ENCODE measurements at regions of chr3 and their contacts with region 1.

Region 1: DNA sequence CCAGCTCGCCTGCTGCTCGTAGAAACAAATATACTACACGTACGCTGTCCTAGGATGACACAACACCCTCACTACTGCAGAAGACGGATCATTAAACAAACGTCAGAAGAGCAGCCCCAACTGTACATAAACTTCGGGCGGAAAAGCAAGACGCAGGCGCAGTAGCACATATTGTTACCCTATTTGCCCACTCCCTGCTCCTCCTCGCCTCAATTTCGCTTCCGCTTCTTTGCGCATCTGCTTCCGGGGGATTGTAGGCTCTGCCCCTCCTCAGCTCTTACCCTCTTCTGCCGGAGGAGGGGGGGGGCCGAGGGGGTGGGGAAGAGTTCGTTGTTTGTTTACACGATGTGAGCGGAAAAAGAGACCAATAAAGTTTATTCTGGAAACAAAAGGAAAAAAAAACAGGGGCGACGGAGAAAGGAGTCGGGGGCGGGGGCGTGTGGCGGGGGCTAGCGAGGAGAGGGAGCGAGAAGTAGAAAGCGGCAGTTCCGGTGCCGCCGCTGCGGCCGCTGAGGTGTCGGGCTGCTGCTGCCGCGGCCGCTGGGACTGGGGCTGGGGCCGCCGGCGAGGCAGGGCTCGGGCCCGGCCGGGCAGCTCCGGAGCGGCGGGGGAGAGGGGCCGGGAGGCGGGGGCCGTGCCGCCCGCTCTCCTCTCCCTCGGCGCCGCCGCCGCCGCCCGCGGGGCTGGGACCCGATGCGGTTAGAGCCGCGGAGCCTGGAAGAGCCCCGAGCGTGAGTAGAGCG is at the start of gene PIK3CA:
- DNase-seq: peak; percentile 98
- ATAC-seq: peak; percentile 82
- H3K4me3 ChIP-seq: peak within 1 kb of the TSS; percentile 91
- H3K27ac ChIP-seq: peak within 1 kb of the TSS; percentile 29
- H3K4me1 ChIP-seq: peaks cover 12% of the 10 kb centered on the region; the same call in 1 of the 2 replicates
- H3K27me3 ChIP-seq: no peaks in the 10 kb centered on the region
- CTCF ChIP-seq: no peak
- total RNA-seq, gene PIK3CA: 13.4 and 20.5 TPM in 2 replicates

Region 2: GRCh38 chr3:178966299-178967176 is 181.5 kb before region 1 on chr3:
- CTCF ChIA-PET with region 1: no interaction called
- POLR2A ChIA-PET with region 1: no interaction called
- intact Hi-C with region 1: no loop called
- DNase-seq: peak; percentile 61
- ATAC-seq: peak; percentile 57
- H3K4me3 ChIP-seq: peak overlapping the region; percentile 26; the same call in 1 of the 2 replicates
- H3K27ac ChIP-seq: no peak overlapping the region
- H3K4me1 ChIP-seq: peaks cover 2% of the 10 kb centered on the region; the same call in 1 of the 2 replicates
- H3K27me3 ChIP-seq: peaks cover 4% of the 10 kb centered on the region; the same call in 1 of the 2 replicates
- CTCF ChIP-seq: peak; percentile 80

Region 3: DNA sequence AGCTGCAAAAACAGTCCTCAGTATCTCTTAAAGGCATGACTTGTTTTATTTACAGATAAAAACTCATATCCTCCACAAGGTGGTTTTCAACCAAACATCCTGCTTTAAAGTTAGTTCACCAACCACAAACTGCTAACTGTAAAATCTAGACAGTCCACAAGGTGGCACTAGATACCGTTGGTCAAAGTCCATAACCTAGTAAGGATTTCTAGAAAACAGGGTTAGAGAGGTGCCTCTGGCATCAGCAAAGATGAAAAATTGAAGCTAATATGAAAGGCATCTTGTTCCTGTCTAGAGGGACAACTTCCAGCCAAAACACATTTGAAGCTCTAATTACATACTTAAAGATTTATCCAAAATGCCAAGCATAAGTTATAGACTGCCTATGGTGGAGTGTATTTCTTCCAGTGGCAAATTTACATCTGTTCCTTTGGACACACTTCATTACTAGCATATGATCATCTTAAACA is 132.5 kb before region 1 on chr3:
- CTCF ChIA-PET with region 1: no interaction called
- POLR2A ChIA-PET with region 1: interaction called, 6 read pairs
- intact Hi-C with region 1: loop called (anchors 1 kb)
- DNase-seq: peak; percentile 96
- ATAC-seq: peak; percentile 86
- H3K4me3 ChIP-seq: no peak overlapping the region
- H3K27ac ChIP-seq: no peak overlapping the region
- H3K4me1 ChIP-seq: peaks cover 4% of the 10 kb centered on the region; the same call in 1 of the 2 replicates
- H3K27me3 ChIP-seq: no peaks in the 10 kb centered on the region
- CTCF ChIP-seq: peak; percentile 95

Region 4: DNA sequence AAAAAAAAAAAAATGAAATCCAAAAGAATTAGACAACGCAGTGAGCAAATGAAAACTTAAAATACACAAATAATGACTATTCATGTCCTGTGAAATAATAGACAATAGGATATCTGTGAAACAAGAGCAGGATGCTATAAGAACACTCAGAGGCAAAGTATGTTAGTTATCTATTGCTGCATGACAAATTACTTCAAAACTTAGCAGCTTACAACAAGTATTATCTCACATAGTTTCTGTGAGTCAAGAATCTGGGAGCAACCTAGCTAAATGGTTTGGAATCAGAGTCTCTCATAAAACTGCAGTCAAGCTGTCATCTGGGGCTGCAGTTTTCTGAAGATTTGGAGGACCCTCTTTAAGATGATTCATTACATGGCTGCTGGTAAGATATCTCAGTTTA is 40.0 kb before region 1 on chr3:
- CTCF ChIA-PET with region 1: interaction called, 4 read pairs
- POLR2A ChIA-PET with region 1: interaction called, 15 read pairs
- intact Hi-C with region 1: loop called (anchors 1 kb)
- DNase-seq: peak; percentile 76
- ATAC-seq: peak; percentile 91
- H3K4me3 ChIP-seq: no peak overlapping the region
- H3K27ac ChIP-seq: peak overlapping the region; percentile 35
- H3K4me1 ChIP-seq: peaks cover 14% of the 10 kb centered on the region
- H3K27me3 ChIP-seq: no peaks in the 10 kb centered on the region
- CTCF ChIP-seq: no peak

Region 5: DNA sequence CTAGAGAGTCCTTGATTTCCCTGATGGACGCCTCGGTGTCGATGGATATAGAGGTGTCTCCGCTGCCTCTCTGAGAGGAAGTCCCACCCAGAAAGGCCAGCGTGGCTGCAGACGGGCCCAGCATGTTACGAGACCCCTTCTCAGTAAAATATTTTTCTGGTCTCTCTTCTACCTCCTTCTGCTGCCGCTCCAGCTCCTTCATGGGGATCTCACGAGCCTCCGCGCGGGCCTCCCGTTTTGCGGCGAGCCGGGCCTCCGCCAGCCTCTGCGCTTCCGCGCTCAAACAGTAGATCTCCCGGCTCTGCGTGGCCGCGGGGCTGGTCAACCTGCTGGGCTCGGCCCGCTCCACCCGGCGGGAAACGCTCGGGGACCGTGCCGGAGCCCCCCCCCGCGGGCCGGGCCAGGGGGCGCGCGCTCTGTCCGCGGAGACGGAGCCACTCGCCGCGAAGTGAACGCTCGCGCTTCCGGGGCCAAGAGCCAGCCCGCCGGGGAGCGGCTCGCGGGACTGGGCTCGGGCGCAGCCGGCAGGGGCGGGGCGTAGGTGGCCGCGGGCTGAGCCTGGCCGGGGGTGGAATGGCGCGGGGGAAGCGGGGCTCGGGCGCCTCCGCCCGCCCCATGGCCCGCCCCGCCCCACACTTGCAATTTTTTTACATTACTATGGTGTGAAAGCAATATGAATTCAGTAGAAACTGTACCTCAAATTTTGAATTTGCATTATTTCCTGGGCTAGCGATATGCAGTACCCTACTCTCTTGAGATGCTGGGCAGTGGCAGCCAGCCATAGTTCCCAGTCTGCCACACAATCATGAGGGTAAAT is 113.1 kb after region 1 on chr3:
- CTCF ChIA-PET with region 1: no interaction called
- POLR2A ChIA-PET with region 1: no interaction called
- intact Hi-C with region 1: loop called (anchors 2 kb)
- DNase-seq: peak; percentile 77
- ATAC-seq: peak; percentile 97
- H3K4me3 ChIP-seq: peak overlapping the region; percentile 79
- H3K27ac ChIP-seq: no peak overlapping the region
- H3K4me1 ChIP-seq: peaks cover 11% of the 10 kb centered on the region
- H3K27me3 ChIP-seq: no peaks in the 10 kb centered on the region
- CTCF ChIP-seq: no peak

Region 6: DNA sequence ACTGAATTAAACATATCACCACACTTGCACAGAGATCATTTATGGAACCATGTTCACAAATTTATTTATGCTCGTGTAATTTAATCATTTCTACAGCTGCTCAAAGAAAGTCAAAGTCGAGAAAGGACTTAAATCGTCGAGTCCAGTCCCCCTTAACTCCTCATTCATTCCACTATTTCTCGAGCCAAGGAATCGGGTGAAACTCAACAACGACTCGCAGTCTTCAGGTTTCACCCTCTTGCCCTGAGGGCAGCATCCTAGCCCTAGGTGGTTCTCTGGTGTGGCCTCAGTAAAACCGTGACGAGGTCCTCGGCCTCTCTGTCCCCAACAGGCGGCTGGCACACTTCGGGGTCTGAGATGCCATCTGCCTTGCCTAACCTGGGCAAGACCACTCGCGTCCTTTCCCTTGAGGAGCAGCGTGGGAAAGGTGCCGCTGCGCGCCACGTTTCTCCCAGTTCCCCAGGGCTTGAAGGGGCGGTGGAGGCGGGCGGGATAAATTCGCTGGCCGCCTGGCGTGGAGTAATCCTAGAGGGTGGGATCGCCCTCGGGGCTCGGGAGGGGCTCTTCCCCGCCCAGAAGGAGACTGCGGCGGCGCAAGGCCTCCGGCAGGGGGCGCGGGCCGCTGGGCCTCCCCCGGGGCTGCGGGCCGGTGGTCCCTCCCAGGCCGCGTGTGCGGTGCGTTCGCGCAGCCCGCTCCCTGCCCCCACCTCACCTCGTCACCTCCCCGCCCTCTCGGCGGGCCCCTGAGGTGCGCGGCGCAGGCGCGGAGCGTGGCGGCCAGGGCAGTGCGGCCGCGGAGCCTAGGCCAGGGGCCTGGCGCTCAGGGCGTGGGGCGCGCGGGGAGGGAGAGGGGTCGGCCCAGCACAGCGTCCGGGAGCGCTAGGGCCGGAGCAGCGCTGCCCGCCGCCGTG is 174.5 kb after region 1 on chr3 and contains the start of gene ZNF639:
- CTCF ChIA-PET with region 1: interaction called, 4 read pairs
- POLR2A ChIA-PET with region 1: interaction called, 5 read pairs
- intact Hi-C with region 1: loop called (anchors 1 kb)
- DNase-seq: peak; percentile 89
- ATAC-seq: peak; percentile 72
- H3K4me3 ChIP-seq: peak within 1 kb of the TSS; percentile 82
- H3K27ac ChIP-seq: peak within 1 kb of the TSS; percentile 68
- H3K4me1 ChIP-seq: peaks cover 24% of the 10 kb centered on the region; the same call in 1 of the 2 replicates
- H3K27me3 ChIP-seq: no peaks in the 10 kb centered on the region
- CTCF ChIP-seq: peak; percentile 72
- total RNA-seq, gene ZNF639: 52.5 and 60.4 TPM in 2 replicates